Natural killer cell (primary cell): ENCODE measurements at regions of chr4 and their contacts with region 1.

Region 1: DNA sequence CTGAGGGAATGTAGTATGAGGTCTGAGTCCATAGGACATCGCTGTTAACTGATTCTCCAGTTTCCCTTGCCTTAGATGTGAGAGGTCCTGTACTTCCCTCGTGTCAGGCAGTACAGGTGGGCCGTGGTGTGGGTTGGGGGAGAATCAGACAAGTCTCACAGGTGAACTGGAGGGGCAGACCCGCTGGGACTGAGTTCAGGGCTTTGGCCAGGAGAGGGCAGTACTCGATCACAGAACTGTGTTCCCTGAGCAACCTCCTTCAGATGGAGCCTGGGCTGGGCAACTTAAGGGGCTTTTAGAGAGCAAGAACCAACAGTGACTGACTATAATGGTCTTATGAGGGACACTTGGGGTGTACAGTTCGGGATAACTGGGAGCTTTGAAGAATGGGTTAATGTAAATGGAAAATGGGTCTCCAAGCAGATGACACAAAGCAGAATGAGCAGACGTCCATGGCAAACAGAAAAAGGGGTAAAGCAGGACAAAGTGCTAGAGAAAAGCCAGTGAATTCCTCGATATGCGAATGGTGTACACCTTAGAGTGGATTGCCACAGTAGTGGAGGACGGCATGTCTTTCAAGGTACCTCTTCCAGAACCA is 83.6 kb downstream of the CCNG2 start:
- DNase-seq: peak; percentile 40 to 65
- ATAC-seq: peak; percentile 45 to 69 (median 49)
- H3K4me3 ChIP-seq: no peak overlapping the region
- H3K4me3 Mint-ChIP-seq: no peak overlapping the region
- H3K27ac ChIP-seq: no peak overlapping the region
- H3K27ac Mint-ChIP-seq: no peak overlapping the region
- H3K4me1 ChIP-seq: no peaks in the 10 kb centered on the region
- H3K4me1 Mint-ChIP-seq: no peaks in the 10 kb centered on the region
- H3K27me3 ChIP-seq: no peaks in the 10 kb centered on the region
- H3K27me3 Mint-ChIP-seq: peaks cover 10 to 28% of the 10 kb centered on the region in 2 donors
- CTCF ChIP-seq: peak; percentile 56

Region 2: GRCh38 chr4:76856243-76857073 is 384.1 kb before region 1 on chr4:
- intact Hi-C with region 1: no loop called
- DNase-seq: no peak
- ATAC-seq: no peak
- H3K4me3 ChIP-seq: no peak overlapping the region
- H3K4me3 Mint-ChIP-seq: no peak overlapping the region
- H3K27ac ChIP-seq: no peak overlapping the region
- H3K27ac Mint-ChIP-seq: no peak overlapping the region
- H3K4me1 ChIP-seq: no peaks in the 10 kb centered on the region
- H3K4me1 Mint-ChIP-seq: no peaks in the 10 kb centered on the region
- H3K27me3 ChIP-seq: no peaks in the 10 kb centered on the region
- H3K27me3 Mint-ChIP-seq: peaks cover 13 to 18% of the 10 kb centered on the region in 2 donors
- CTCF ChIP-seq: no peak

Region 3: DNA sequence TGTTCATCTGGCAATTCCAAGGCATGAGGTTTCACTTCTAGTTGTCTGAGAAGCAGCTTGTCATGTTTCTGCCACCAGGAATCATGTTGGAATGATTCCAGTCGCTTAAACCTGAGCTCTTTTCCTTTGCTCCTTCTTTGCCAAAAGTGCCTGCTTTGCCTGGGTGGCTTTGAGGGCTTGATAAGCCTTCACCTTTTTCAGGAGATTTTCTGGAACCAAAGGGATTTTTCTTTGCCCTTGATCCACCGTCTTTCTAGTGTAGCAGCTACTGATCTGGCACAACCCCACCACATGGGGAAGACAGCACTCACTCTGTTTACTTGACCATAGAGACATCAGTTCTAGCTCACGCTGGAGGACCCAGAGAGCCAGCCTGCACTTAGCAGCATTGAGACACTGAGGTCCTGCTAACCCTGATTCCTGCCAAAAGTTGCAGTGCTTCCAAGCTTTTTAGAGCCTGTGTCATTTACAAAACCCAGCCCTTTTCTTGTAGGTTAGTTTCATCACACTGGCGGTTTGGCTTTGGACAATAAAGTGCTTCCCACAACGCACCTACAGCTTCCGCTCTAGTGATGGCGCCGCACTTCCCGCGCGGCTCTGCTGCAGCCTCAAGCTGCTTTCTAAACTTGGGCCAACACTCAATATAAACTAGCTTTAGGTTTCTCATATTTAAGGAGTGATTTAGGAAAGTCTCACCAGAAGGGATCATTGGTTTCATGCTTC is 157.5 kb before region 1 on chr4:
- intact Hi-C with region 1: no loop called
- DNase-seq: no peak
- ATAC-seq: no peak
- H3K4me3 ChIP-seq: no peak overlapping the region
- H3K4me3 Mint-ChIP-seq: no peak overlapping the region
- H3K27ac ChIP-seq: no peak overlapping the region
- H3K27ac Mint-ChIP-seq: no peak overlapping the region
- H3K4me1 ChIP-seq: no peaks in the 10 kb centered on the region
- H3K4me1 Mint-ChIP-seq: peaks cover 9 to 10% of the 10 kb centered on the region in 2 donors
- H3K27me3 ChIP-seq: no peaks in the 10 kb centered on the region
- H3K27me3 Mint-ChIP-seq: no peaks in the 10 kb centered on the region
- CTCF ChIP-seq: no peak

Region 4: GRCh38 chr4:77393996-77394395 is 153.4 kb after region 1 on chr4:
- intact Hi-C with region 1: no loop called
- DNase-seq: no peak
- ATAC-seq: no peak
- H3K4me3 ChIP-seq: no peak overlapping the region
- H3K4me3 Mint-ChIP-seq: no peak overlapping the region
- H3K27ac ChIP-seq: no peak overlapping the region
- H3K27ac Mint-ChIP-seq: no peak overlapping the region
- H3K4me1 ChIP-seq: no peaks in the 10 kb centered on the region
- H3K4me1 Mint-ChIP-seq: peaks cover 0 to 5% of the 10 kb centered on the region in 2 donors
- H3K27me3 ChIP-seq: no peaks in the 10 kb centered on the region
- H3K27me3 Mint-ChIP-seq: peaks cover 0 to 7% of the 10 kb centered on the region in 2 donors
- CTCF ChIP-seq: no peak

Region 5: DNA sequence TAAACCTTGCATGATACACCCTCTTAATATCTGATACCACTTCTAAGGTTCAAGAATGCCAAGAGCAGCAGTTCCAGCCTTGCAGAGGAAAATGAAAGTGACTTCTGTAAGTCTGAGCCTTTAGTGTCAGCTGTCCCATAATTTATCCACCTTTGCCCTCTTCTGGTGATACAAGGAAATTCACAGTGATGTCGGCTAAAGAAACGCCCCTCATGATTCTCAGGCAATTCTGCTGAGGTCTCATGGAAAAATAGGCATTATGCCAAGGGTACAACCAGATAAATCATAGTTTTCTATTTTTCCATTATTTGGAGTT is 192.8 kb after region 1 on chr4:
- intact Hi-C with region 1: loop called (anchors 5 kb)
- DNase-seq: peak in 1 of 2 donors; percentile 63
- ATAC-seq: peak in 2 of 3 donors; percentile 61 to 79
- H3K4me3 ChIP-seq: no peak overlapping the region
- H3K4me3 Mint-ChIP-seq: no peak overlapping the region
- H3K27ac ChIP-seq: no peak overlapping the region
- H3K27ac Mint-ChIP-seq: no peak overlapping the region
- H3K4me1 ChIP-seq: no peaks in the 10 kb centered on the region
- H3K4me1 Mint-ChIP-seq: peaks cover 0 to 5% of the 10 kb centered on the region in 2 donors
- H3K27me3 ChIP-seq: no peaks in the 10 kb centered on the region
- H3K27me3 Mint-ChIP-seq: peaks cover 0 to 2% of the 10 kb centered on the region in 2 donors
- CTCF ChIP-seq: peak; percentile 31

Region 6: DNA sequence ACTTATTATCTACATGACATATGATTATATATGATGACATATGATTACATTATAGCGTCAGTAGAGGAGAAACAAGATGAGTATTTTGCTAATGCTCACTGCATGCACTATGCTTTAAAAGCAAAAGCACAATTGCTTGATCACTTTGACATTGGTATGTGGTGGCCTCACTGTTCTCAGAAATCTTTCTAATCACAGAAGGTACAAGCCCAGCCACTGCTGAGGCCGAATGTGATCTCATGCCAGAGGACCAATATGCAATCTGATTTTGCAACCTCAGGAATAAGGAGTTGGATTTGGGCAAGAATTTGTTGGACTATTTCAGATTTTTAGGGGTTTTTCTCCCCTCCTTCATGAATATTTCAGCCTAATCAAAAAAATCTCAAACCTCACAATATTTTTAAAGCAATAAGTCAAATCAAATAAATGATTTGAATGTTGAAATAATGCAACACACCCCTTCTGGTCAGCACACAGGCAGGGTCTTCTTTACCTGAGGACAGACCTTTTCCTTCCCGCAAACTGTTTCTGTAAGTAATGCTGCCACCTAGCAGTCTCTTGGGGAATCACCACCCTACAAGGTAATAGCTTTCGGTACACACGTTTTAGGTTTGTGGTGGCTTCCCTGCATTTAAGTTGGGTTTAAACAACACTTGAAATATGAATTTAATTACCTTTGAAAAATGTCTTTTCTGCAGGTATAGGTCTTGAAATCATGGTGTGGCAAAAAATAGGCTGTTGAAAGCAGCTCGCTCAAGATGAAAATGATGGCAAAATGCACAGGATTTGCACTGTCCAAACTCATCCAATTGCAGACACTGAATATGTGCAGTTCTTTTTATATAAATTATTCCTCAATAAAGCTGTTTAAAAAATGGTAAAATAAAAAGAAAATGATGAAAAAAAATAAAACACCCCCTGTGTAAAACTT is 360.2 kb after region 1 on chr4:
- intact Hi-C with region 1: loop called (anchors 5 kb)
- DNase-seq: peak in 1 of 2 donors; percentile 56
- ATAC-seq: peak in 2 of 3 donors; percentile 53 to 73
- H3K4me3 ChIP-seq: no peak overlapping the region
- H3K4me3 Mint-ChIP-seq: no peak overlapping the region
- H3K27ac ChIP-seq: no peak overlapping the region
- H3K27ac Mint-ChIP-seq: no peak overlapping the region
- H3K4me1 ChIP-seq: no peaks in the 10 kb centered on the region
- H3K4me1 Mint-ChIP-seq: peaks cover 2% of the 10 kb centered on the region in 2 donors
- H3K27me3 ChIP-seq: no peaks in the 10 kb centered on the region
- H3K27me3 Mint-ChIP-seq: peaks cover 9 to 18% of the 10 kb centered on the region in 2 donors
- CTCF ChIP-seq: peak; percentile 75

Region 7: DNA sequence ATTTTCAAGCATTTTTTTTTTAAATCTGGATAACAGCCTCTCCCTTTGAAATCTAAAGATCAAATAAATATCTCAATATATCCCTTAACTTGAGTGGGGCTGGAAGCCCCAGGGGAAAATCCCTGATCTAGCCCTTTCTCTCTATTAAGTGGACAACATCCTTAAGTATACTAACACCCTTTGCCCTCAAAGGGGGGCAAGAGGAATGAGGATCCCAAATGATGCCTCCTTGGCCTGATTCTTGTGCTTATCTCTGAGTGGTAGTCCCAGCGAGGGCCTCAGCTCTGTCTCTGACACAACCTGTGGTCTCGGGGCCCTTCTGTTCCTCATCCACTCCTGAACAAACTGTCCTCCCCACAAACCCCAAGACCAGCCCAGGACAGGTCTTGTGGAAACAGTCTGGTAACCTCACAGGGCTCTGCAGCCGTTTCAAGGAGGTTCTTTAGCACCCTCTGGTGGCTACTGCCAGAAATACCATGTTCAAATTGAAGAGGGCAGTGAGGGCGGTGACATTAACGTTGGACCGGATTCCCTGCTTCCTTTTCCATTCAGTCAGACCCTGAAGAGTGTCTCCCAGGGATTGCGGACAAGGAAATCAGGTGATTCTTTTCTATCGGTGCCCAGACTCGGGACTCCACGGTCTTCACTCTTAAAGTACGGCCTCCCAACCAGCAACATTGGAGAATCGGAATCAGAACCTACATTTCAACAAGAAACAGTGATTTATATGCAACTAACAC is 378.0 kb after region 1 on chr4:
- intact Hi-C with region 1: loop called (anchors 5 kb)
- DNase-seq: peak; percentile 27 to 76
- ATAC-seq: peak; percentile 88 to 97 (median 88)
- H3K4me3 ChIP-seq: no peak overlapping the region
- H3K4me3 Mint-ChIP-seq: no peak overlapping the region
- H3K27ac ChIP-seq: no peak overlapping the region
- H3K27ac Mint-ChIP-seq: no peak overlapping the region
- H3K4me1 ChIP-seq: peaks cover 6% of the 10 kb centered on the region
- H3K4me1 Mint-ChIP-seq: peaks cover 10% of the 10 kb centered on the region in 2 donors
- H3K27me3 ChIP-seq: no peaks in the 10 kb centered on the region
- H3K27me3 Mint-ChIP-seq: peaks cover 23 to 27% of the 10 kb centered on the region in 2 donors
- CTCF ChIP-seq: peak; percentile 94